ENCODE measurements at regions of chr6 and their contacts with region 1.

Region 1: GRCh38 chr6:92376691-92377090 is 1042.7 kb downstream of the EPHA7 start:
- DNase-seq: no peak
- H3K4me3 Mint-ChIP-seq: no peak overlapping the region
- H3K27ac Mint-ChIP-seq: no peak overlapping the region
- H3K4me1 Mint-ChIP-seq: no peaks in the 10 kb centered on the region
- H3K27me3 Mint-ChIP-seq: no peaks in the 10 kb centered on the region

Region 2: GRCh38 chr6:92363111-92363510 is 13.6 kb before region 1 on chr6:
- intact Hi-C with region 1: loop called (anchors 1 kb)
- DNase-seq: no peak
- H3K4me3 Mint-ChIP-seq: no peak overlapping the region
- H3K27ac Mint-ChIP-seq: no peak overlapping the region
- H3K4me1 Mint-ChIP-seq: no peaks in the 10 kb centered on the region
- H3K27me3 Mint-ChIP-seq: no peaks in the 10 kb centered on the region